Left ventricle myocardium inferior (tissue), 1 donor: ENCODE measurements at regions of chr12 and their contacts with region 1.

Region 1: GRCh38 chr12:130401703-130402102 is 64.0 kb downstream of the PIWIL1 start:
- DNase-seq: no peak
- H3K4me3 ChIP-seq: no peak overlapping the region
- H3K27ac ChIP-seq: no peak overlapping the region
- H3K4me1 ChIP-seq: peaks cover 3% of the 10 kb centered on the region
- H3K27me3 ChIP-seq: peaks cover 57% of the 10 kb centered on the region
- CTCF ChIP-seq: peak; percentile 52

Region 2: GRCh38 chr12:130161261-130162243 is 240.2 kb before region 1 on chr12:
- intact Hi-C with region 1: no loop called
- DNase-seq: peak; percentile 27
- H3K4me3 ChIP-seq: peak overlapping the region; percentile 62
- H3K27ac ChIP-seq: no peak overlapping the region
- H3K4me1 ChIP-seq: peaks cover 22% of the 10 kb centered on the region
- H3K27me3 ChIP-seq: peaks cover 97% of the 10 kb centered on the region
- CTCF ChIP-seq: no peak

Region 3: GRCh38 chr12:130747867-130748740 is 346.4 kb after region 1 on chr12:
- intact Hi-C with region 1: loop called (anchors 5 kb)
- DNase-seq: peak; percentile 79
- H3K4me3 ChIP-seq: no peak overlapping the region
- H3K27ac ChIP-seq: no peak overlapping the region
- H3K4me1 ChIP-seq: peaks cover 4% of the 10 kb centered on the region
- H3K27me3 ChIP-seq: peaks cover 84% of the 10 kb centered on the region
- CTCF ChIP-seq: peak; percentile 88